Endothelial cell of umbilical vein (primary cell): ENCODE measurements at regions of chr19 and their contacts with region 1.

Region 1: GRCh38 chr19:17766543-17767131 is 15.4 kb downstream of the FCHO1 start:
- DNase-seq: peak; percentile 73
- H3K4me3 ChIP-seq: no peak overlapping the region
- H3K27ac ChIP-seq: no peak overlapping the region
- H3K4me1 ChIP-seq: peaks cover 3% of the 10 kb centered on the region
- H3K27me3 ChIP-seq: no peaks in the 10 kb centered on the region
- CTCF ChIP-seq: peak; percentile 96 to 97
- POLR2A ChIP-seq: no peak

Region 2: DNA sequence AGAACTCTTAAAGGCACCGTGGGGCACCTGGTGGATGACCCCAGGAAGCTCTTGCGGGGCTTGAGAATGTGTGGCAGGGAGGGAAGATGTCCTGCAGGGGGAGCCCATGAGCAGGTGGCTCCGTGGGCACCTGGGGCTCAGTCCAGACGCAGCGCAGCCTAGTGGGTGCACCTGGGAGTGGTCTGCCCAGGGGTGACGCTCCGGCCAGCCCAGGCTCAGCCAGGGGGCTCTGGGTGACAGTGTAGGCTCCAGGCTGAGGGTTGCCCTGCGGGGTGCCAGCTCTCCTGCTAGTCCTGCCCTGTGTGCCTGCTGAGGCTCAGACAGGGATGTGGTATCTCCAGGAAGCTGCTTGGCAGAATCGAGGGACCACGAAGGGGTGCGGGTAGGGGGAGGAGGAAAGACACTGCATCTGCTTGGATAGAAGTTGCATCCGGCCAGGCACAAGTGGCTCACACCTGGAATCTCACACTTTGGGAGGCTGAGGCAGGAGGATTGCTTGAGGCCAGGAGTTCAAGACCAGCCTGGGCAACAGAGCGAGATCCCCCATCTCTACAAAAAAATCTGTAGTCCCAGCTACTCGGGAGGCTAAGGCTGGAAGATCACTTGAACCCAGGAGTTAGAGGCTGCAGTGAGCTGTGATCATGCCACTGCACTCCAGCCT is 270.2 kb before region 1 on chr19:
- CTCF ChIA-PET with region 1: interaction called, 19 read pairs
- POLR2A ChIA-PET with region 1: no interaction called
- dilution Hi-C with region 1: no loop called
- intact Hi-C with region 1: no loop called
- DNase-seq: peak; percentile 81
- H3K4me3 ChIP-seq: no peak overlapping the region
- H3K27ac ChIP-seq: no peak overlapping the region
- H3K4me1 ChIP-seq: peaks cover 12% of the 10 kb centered on the region
- H3K27me3 ChIP-seq: no peaks in the 10 kb centered on the region
- CTCF ChIP-seq: peak; percentile 99
- POLR2A ChIP-seq: no peak

Region 3: DNA sequence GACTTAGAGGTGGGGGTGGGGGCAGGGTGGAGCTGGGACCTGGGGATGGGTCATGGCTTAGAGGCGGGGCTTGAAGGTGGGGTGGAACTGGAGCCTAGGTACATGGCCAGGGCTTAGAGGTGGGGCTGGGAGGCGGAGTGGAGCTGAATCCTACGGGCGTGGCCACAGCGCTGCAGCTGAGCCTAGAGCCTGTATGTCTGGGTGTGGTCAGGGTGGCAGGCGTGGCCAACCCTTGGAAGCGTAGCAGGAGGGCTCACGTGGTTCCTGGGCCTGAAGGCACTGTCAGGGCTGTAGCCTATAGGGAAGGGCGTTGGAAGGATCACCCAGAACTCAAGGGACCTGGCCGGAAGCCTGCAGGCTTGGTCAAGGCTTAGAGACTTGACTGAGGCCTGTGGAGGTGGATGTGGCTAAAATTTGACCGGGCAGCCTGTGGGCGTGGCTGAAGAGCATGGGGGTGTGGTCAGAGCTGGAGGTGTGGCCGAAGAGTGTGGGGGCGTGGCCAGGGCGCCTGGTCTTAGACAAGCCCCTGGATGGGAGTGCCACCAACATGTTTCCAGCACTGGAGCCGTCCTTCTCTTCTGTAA is 186.9 kb before region 1 on chr19:
- CTCF ChIA-PET with region 1: interaction called, 10 read pairs
- POLR2A ChIA-PET with region 1: no interaction called
- dilution Hi-C with region 1: no loop called
- intact Hi-C with region 1: no loop called
- DNase-seq: peak; percentile 39
- H3K4me3 ChIP-seq: no peak overlapping the region
- H3K27ac ChIP-seq: no peak overlapping the region
- H3K4me1 ChIP-seq: no peaks in the 10 kb centered on the region
- H3K27me3 ChIP-seq: no peaks in the 10 kb centered on the region
- CTCF ChIP-seq: no peak
- POLR2A ChIP-seq: no peak

Region 4: DNA sequence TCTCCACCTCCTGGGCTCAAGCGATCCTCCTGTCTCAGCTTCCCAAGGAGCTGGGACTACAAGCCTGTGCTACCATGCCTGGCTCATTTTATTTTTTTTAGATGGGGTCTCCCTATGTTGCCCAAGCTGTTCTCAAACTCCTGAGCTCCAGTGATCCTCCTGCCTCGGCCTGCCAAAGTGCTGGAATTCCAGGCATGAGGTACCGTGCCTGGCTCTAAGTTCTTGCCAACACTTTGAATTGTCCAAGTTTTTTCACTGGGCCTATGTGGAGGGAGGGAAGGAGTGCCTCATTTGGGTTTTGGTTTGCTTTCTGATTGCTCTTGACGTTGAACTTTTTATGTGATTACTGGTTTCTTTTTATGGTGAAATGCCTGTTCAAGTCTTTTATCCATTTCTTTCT is 74.1 kb before region 1 on chr19:
- CTCF ChIA-PET with region 1: interaction called, 12 read pairs
- POLR2A ChIA-PET with region 1: no interaction called
- dilution Hi-C with region 1: no loop called
- intact Hi-C with region 1: no loop called
- DNase-seq: no peak
- H3K4me3 ChIP-seq: no peak overlapping the region
- H3K27ac ChIP-seq: no peak overlapping the region
- H3K4me1 ChIP-seq: no peaks in the 10 kb centered on the region
- H3K27me3 ChIP-seq: peaks cover 5 to 9% of the 10 kb centered on the region in 2 experiments
- CTCF ChIP-seq: no peak
- POLR2A ChIP-seq: no peak

Region 5: DNA sequence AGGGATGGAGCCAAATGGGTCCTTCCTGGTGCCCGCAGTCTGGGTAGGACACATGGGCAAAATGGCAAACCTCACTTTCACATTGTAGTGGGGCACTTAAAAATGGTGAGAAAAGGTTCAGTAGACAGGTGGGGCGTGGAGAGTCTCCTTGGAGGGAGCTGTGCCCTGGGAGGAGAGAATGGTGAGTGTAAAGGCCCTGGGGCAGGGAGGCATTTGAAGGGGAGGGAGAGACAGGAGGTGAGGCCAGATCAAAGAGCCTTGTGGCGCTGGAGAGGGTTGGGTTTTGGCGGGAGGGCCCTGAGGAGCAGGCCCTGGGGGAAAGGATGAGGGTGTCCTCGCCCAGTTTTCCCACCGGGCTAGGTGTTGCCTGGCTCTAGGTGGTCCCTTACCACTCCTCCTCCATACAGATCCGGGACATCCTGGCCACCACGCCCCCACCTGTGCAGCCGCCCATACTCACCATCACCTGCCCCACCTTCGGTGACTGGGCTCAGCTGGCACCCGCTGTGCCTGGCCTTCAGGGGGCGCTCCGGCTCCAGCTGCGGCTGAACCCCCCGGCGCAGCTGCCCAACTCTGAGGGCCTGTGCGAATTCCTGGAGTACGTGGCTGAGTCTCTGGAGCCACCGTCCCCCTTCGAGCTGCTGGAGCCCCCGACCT is 41.1 kb before region 1 on chr19:
- CTCF ChIA-PET with region 1: interaction called, 26 read pairs
- POLR2A ChIA-PET with region 1: no interaction called
- dilution Hi-C with region 1: no loop called
- intact Hi-C with region 1: no loop called
- DNase-seq: no peak
- H3K4me3 ChIP-seq: no peak overlapping the region
- H3K27ac ChIP-seq: no peak overlapping the region
- H3K4me1 ChIP-seq: peaks cover 23% of the 10 kb centered on the region
- H3K27me3 ChIP-seq: no peaks in the 10 kb centered on the region
- CTCF ChIP-seq: peak; percentile 24 to 32
- POLR2A ChIP-seq: no peak

Region 6: DNA sequence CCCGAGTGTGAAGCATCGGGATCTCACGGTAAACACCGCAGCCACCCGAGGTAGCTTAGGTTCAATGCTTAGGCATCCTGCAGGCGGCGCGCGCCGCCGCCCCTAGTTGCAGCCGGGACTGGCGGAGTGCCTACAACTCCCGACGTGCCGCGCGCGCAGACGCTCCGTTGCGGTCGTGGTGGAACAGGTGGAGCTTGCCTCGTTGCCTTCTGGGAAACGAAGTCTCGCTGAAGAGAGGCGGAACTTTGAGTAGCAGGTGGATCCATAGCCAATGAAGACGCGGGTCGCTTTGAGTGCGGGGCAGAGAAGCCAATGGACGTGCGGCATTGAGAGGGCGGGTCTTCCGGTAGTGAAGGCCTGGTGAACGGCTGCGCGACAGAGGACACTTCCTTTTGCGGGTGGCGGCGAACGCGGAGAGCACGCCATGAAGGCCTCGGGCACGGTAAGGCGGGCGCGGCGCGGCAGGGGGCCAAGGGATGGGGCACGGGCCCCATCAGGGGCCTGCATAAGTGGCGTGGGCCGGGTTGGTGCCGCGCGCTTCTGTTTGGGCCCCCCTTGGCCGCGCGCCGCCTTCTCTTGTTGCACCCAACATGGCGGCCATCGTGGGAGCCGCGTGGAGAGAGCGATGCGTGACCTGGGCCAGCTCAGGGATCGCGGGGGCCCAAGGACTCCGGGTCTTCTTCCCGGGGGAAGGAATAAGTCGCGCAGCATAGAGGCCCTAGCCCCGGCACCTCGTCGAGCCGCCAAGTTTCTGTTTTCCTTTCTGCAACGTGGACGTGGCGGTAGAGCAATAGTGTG is 93.1 kb after region 1 on chr19 and contains the start of gene RPL18A:
- CTCF ChIA-PET with region 1: interaction called, 15 read pairs
- POLR2A ChIA-PET with region 1: no interaction called
- dilution Hi-C with region 1: no loop called
- intact Hi-C with region 1: no loop called
- DNase-seq: peak; percentile 100
- H3K4me3 ChIP-seq: peak within 1 kb of the TSS; percentile 83 to 96 (median 92)
- H3K27ac ChIP-seq: peak within 1 kb of the TSS; percentile 42
- H3K4me1 ChIP-seq: peaks cover 15% of the 10 kb centered on the region
- H3K27me3 ChIP-seq: no peaks in the 10 kb centered on the region
- CTCF ChIP-seq: peak; percentile 84 to 90
- POLR2A ChIP-seq: peak; percentile 96
- total RNA-seq, gene RPL18A: 1,947 and 1,970 TPM in 2 replicates